ENCODE measurements at regions of chr5 and their contacts with region 1.

Region 1: DNA sequence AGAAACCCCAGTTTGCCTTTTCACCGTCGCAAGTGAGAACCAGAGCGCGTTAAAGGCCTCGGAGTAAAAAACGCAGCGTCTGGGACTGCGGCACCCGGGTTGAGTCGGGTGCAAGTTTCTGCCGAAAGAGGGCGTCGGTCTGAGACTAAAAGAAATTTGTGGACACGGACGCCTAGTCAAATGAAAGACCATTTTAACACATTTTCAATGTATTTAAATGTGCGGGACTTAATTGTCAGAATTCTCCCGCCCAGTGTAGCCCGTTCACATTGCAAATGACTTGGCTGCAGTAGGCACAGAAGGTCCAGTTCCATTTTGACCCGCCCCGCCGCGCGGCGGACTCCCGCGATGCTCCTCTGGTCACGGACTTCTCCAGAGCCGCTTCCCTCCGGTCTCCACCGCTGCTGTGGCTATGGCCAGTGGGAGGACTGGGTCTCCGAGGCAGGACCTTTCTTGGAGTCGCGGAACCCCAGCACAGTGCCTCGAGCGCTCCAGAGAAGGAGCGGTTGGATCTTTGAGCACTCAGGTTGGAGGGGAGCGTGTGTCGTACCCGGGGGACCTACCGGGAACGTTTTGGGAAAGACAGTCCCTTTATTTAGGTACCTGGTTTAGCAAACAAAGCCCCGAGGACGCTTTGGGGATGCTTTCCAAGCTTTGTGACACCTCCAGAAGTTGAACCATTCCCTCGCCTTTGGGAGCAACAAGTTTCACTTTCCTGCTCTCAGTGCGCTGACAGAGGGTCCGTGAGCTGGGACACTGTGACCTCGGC is 1.2 kb upstream of the NPR3 start:
- DNase-seq: peak; percentile 88
- H3K4me3 Mint-ChIP-seq: peak overlapping the region; percentile 84
- H3K27ac Mint-ChIP-seq: no peak overlapping the region
- H3K4me1 Mint-ChIP-seq: peaks cover 21% of the 10 kb centered on the region
- H3K27me3 Mint-ChIP-seq: peaks cover 68% of the 10 kb centered on the region

Region 2: GRCh38 chr5:33299621-33300208 is 589.8 kb after region 1 on chr5:
- intact Hi-C with region 1: loop called (anchors 5 kb)
- DNase-seq: peak; percentile 57
- H3K4me3 Mint-ChIP-seq: no peak overlapping the region
- H3K27ac Mint-ChIP-seq: no peak overlapping the region
- H3K4me1 Mint-ChIP-seq: peaks cover 7% of the 10 kb centered on the region
- H3K27me3 Mint-ChIP-seq: peaks cover 10% of the 10 kb centered on the region

Region 3: GRCh38 chr5:33423018-33423630 is 713.2 kb after region 1 on chr5:
- intact Hi-C with region 1: loop called (anchors 2 kb)
- DNase-seq: no peak
- H3K4me3 Mint-ChIP-seq: no peak overlapping the region
- H3K27ac Mint-ChIP-seq: no peak overlapping the region
- H3K4me1 Mint-ChIP-seq: no peaks in the 10 kb centered on the region
- H3K27me3 Mint-ChIP-seq: peaks cover 9% of the 10 kb centered on the region

Region 4: DNA sequence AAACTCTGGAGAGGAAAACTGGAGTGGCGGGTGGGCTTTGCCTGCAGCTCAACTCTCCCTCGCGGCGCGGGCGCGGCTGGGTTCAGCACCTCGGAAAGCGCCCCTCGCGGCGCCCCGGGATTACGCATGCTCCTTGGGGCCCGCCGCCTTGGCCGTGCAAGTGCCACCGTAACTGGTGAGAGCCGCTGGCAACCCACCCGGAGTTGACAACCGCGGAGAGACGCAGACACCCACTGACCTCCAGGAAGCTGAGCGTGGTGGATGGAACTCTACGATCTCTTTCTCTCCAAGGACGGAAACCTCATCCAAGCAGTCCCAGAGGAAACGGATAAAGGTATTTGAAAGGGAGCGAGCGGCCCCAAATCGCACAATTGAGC is 1226.0 kb after region 1 on chr5:
- intact Hi-C with region 1: loop called (anchors 5 kb)
- DNase-seq: peak; percentile 87
- H3K4me3 Mint-ChIP-seq: no peak overlapping the region
- H3K27ac Mint-ChIP-seq: no peak overlapping the region
- H3K4me1 Mint-ChIP-seq: peaks cover 3% of the 10 kb centered on the region
- H3K27me3 Mint-ChIP-seq: peaks cover 60% of the 10 kb centered on the region

Measured in activated CD4-positive, alpha-beta T cell treated with anti-CD3 and anti-CD28 coated beads, Interleukin-2, amount 10 ng/mL, durations not matched to agents 24 days and 14 days (primary cell).